Right cardiac atrium (tissue), 5 donors: ENCODE measurements at regions of chr22 and their contacts with region 1.

Region 1: DNA sequence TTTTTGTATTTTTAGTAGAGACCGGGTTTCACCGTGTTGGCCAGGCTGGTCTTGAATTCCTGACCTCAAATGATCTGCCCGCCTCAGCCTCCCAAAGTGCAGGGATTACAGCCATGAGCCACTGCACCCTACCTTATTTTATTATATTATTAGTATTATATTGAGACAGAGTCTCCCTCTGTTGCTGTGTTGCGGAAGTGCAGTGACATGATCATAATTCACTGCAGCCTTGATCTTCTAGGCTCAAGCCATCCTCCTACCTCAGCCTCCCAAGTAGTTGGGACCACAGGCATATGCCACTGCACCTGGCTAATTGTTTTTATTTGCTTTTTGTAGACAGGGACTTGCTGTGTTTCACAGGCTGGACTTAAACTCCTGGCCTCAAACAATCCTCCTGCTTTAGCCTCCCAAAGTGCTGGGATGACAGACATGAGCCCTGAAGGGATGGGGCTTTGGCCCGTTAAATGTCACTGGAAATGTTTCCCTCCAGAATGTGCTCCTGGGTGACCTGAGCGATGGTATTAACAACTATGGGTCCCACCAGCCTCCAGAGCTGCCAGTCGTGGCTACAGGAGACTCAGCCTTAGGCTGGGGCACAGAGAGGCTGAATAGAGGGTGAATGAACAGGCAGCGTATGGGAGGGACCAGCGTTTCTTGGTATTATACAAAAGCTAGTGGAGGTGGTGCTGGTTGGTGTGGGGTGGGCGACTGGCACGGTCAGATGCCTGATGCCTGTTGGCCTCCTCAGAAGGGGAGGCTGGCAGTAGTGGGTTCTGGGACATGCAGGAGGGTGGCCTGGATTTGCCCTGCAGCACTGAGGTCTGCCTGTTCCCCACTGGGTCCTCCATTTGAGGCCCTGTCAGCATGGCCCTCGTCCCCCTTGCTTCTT is 7.3 kb downstream of the TANGO2 start:
- DNase-seq: peak in 2 of 3 donors; percentile 14 to 23
- ATAC-seq: no peak
- H3K4me3 ChIP-seq: no peak overlapping the region
- H3K27ac ChIP-seq: no peak overlapping the region
- H3K4me1 ChIP-seq: peaks cover 25% of the 10 kb centered on the region
- H3K27me3 ChIP-seq: no peaks in the 10 kb centered on the region

Region 2: DNA sequence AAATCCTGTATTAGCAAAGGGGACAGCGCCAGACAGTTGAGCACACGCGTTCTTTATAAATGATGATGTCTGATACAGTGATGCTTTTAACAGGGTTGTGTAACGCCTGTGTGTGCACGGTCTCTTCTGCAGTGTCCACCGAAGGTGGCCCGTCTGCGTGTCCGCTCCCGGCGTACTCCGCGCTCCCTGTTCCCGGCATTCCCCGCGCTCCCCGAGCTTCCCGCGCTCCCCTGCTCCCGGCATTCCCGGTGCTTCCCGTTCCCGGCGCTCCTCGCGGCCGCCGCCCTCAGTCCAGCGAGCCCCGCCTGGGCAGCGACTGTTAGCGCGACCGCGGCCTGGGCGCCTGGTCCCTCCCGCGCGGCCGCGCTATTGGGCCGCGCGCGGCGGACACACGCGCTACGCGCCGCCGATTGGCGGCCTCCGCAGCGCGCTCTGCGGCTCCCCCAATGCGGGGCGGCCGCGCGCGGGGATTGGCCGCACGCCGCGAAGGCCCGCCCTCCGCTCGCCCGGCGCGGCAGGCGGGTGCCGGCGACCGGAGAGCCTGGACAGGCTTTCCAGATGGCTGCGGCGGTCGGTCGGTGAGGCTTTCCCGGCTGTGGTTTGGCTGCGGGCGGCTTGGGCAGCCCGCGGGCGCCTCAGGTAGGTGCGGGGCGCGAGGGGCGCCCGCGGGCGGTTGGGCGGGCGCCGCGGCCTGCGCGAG is 51.7 kb after region 1 on chr22 and contains the start of gene DGCR8:
- intact Hi-C with region 1: loop called in 1 of 4 experiments (anchors 5 kb)
- DNase-seq: peak; percentile 94 to 98 (median 98)
- ATAC-seq: peak; percentile 96 to 97
- H3K4me3 ChIP-seq: peak within 1 kb of the TSS; percentile 94
- H3K27ac ChIP-seq: peak within 1 kb of the TSS; percentile 87
- H3K4me1 ChIP-seq: peaks cover 24% of the 10 kb centered on the region
- H3K27me3 ChIP-seq: no peaks in the 10 kb centered on the region
- total RNA-seq, gene DGCR8: 15.5 to 18.6 (median 17.0) TPM